ENCODE measurements at regions of chr12 and their contacts with region 1.

Region 1: GRCh38 chr12:57462251-57462911 is 2.8 kb downstream of the GLI1 start:
- DNase-seq: peak; percentile 84
- H3K4me3 Mint-ChIP-seq: peak overlapping the region; percentile 86
- H3K27ac Mint-ChIP-seq: peak overlapping the region; percentile 47
- H3K4me1 Mint-ChIP-seq: peaks cover 38% of the 10 kb centered on the region
- H3K27me3 Mint-ChIP-seq: peaks cover 12% of the 10 kb centered on the region

Region 2: DNA sequence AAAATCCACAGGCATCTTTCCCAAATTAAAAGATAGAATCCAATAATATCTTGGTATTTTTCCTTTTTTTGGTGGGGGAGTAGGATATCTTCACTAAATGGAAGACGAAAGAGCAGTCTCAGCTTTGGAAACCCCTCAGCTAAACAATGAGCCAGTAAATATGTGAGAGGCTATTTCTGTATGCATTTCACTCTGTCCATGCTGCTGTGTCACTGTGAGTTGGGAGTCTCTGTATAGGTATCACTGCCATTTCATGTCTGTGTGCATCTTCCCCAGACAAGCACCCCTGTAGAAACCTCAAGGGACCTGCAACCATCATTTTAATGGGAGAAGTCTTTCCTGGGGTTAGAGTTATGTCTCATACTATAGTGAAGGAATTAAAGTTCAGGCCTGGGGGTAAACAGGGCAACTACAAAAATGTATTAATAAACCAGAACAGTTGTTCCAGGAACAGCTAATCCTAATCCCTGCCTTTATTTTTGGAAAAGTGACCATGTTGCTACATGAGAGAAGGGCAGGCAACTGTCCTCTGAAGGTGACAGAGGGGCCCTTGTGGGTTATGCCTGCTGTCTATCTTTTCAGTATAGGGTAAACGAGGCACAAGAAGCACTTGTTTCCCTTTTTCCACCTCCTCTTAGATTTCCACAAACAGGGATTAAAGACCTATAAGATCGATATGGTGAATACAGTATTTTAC is 200.1 kb before region 1 on chr12:
- intact Hi-C with region 1: loop called (anchors 2 kb)
- DNase-seq: no peak
- H3K4me3 Mint-ChIP-seq: no peak overlapping the region
- H3K27ac Mint-ChIP-seq: no peak overlapping the region
- H3K4me1 Mint-ChIP-seq: peaks cover 2% of the 10 kb centered on the region
- H3K27me3 Mint-ChIP-seq: no peaks in the 10 kb centered on the region

Region 3: GRCh38 chr12:57280211-57281062 is 181.9 kb before region 1 on chr12:
- intact Hi-C with region 1: loop called (anchors 5 kb)
- DNase-seq: peak; percentile 68
- H3K4me3 Mint-ChIP-seq: peak overlapping the region; percentile 46
- H3K27ac Mint-ChIP-seq: peak overlapping the region; percentile 92
- H3K4me1 Mint-ChIP-seq: peaks cover 23% of the 10 kb centered on the region
- H3K27me3 Mint-ChIP-seq: no peaks in the 10 kb centered on the region

Region 4: GRCh38 chr12:57309420-57309819 is 153.0 kb before region 1 on chr12:
- intact Hi-C with region 1: loop called (anchors 1 kb)
- DNase-seq: no peak
- H3K4me3 Mint-ChIP-seq: no peak overlapping the region
- H3K27ac Mint-ChIP-seq: no peak overlapping the region
- H3K4me1 Mint-ChIP-seq: peaks cover 8% of the 10 kb centered on the region
- H3K27me3 Mint-ChIP-seq: no peaks in the 10 kb centered on the region

Region 5: DNA sequence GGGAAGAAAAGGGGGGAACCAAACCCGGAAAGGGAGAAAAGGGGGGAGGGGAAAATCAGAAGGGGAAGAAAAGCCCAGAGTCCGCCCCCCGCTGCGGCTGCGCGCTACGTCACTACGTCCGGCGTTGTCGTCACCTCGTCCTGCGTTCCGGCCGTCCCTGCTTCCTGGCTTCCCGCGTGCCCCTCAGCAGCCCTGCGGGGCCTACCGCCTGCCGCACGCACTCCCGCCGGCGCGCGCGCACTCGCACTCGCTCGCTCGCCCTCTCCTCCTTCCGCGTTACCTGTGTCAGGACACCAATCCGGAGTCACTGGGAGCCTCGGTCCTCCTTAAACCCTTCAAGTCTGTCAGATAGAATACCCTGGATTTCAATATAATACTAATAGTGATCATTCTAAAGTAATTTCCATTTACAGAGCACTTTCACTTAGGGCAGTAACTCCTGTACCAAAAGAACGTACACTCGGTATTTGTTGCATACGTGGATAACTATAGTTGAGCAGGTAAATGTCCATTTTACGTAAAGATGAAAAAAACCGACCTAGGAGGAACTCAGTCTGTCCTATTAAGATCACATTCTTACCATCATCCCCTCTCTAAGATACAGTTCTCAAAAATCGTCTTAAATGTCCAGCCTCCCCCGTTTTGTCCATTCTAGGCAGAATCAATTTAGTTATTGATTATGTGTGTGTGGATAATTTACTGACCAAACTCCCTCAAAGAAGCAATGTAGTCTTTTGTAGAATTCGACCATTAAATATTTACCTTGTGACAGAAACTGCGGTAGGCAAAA is 31.3 kb before region 1 on chr12 and contains the start of gene R3HDM2:
- intact Hi-C with region 1: loop called (anchors 1 kb)
- DNase-seq: peak; percentile 91
- H3K4me3 Mint-ChIP-seq: peak within 1 kb of the TSS; percentile 93
- H3K27ac Mint-ChIP-seq: peak within 1 kb of the TSS; percentile 97
- H3K4me1 Mint-ChIP-seq: peaks cover 30% of the 10 kb centered on the region
- H3K27me3 Mint-ChIP-seq: no peaks in the 10 kb centered on the region
- total RNA-seq, gene R3HDM2: 44.9 and 46.9 TPM in 2 replicates

Region 6: GRCh38 chr12:57476162-57476992 is 14.0 kb after region 1 on chr12:
- intact Hi-C with region 1: loop called (anchors 1 kb)
- DNase-seq: peak; percentile 72
- H3K4me3 Mint-ChIP-seq: peak overlapping the region; percentile 93
- H3K27ac Mint-ChIP-seq: peak overlapping the region; percentile 100
- H3K4me1 Mint-ChIP-seq: peaks cover 47% of the 10 kb centered on the region
- H3K27me3 Mint-ChIP-seq: no peaks in the 10 kb centered on the region

Region 7: DNA sequence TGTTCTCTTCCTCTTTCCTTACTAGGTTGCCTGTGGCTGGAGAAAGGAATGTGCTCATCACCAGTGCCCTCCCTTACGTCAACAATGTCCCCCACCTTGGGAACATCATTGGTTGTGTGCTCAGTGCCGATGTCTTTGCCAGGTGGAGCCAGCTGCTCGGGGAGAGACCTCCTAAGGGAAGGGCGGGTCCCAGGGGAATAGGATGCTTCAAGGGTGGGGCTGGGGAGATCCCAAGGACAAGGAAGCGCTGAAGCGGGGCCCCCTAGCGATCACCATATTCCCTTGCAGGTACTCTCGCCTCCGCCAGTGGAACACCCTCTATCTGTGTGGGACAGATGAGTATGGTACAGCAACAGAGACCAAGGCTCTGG is 35.7 kb after region 1 on chr12:
- intact Hi-C with region 1: no loop called
- DNase-seq: no peak
- H3K4me3 Mint-ChIP-seq: no peak overlapping the region
- H3K27ac Mint-ChIP-seq: no peak overlapping the region
- H3K4me1 Mint-ChIP-seq: no peaks in the 10 kb centered on the region
- H3K27me3 Mint-ChIP-seq: no peaks in the 10 kb centered on the region

Region 8: GRCh38 chr12:57621497-57622292 is 159.3 kb after region 1 on chr12:
- intact Hi-C with region 1: loop called (anchors 2 kb)
- DNase-seq: peak; percentile 37
- H3K4me3 Mint-ChIP-seq: peak overlapping the region; percentile 74
- H3K27ac Mint-ChIP-seq: no peak overlapping the region
- H3K4me1 Mint-ChIP-seq: peaks cover 15% of the 10 kb centered on the region
- H3K27me3 Mint-ChIP-seq: peaks cover 89% of the 10 kb centered on the region

Measured in activated T-helper 2 cell treated with anti-CD3 and anti-CD28 coated beads, Interferon-gamma antibody, Interleukin-2, Interleukin-4, amounts not matched to agents 10 μg/mL and 5 μg/mL and 100 μg/mL, durations not matched to agents 14 hours and 24 hours and 36 hours (primary cell).